Activated CD4-positive, alpha-beta memory T cell treated with anti-CD3 and anti-CD28 coated beads for 36 hours (primary cell): ENCODE measurements at regions of chr17 and their contacts with region 1.

Region 1: GRCh38 chr17:48307814-48308411 is 122.1 kb downstream of the SKAP1 start:
- DNase-seq: peak; percentile 66
- H3K4me3 Mint-ChIP-seq: no peak overlapping the region
- H3K27ac Mint-ChIP-seq: no peak overlapping the region
- H3K4me1 Mint-ChIP-seq: peaks cover 11% of the 10 kb centered on the region
- H3K27me3 Mint-ChIP-seq: no peaks in the 10 kb centered on the region

Region 2: DNA sequence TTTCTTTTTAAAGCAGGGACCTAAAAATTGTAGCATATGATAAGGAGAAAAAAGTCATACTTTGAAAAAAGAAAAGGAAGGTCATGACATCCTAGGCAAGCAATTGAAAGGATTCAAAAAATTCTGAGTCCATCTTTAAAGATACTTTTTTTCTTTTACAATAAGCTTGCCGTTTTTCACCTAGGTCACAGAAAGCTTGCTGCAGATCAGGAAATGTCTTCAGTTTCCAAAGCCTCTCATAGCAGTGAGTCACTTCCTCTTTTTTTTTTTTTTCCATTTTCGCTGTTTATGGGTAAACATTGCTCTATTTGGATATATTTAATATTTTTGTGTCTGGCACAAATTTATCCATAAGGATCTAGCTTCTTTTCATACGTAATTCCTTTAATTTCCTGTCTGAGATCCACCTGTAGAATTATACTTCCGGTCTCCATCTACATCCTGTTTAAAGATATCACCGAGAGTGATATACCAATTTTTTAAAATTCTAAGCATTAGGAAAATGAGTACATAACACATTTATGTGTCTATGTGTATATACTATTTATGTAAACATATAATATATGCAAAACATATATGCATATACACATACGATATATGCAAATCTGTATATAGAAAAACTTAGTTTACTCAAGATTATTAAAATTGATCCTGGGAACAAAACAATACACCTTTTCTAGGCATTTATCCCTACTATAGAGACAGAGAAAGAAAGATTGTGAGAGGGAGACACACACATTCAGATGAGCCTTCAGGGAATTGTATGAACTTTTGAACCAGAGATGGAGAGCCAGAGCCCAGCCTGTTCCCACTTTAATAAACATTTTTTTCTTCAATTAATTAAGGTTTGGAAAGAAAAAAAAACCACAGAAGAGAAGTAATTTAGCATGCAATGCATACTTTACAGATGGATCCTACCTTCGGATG is 12.3 kb before region 1 on chr17:
- CTCF ChIA-PET with region 1: interaction called, 12 read pairs
- POLR2A ChIA-PET with region 1: no interaction called
- intact Hi-C with region 1: no loop called
- DNase-seq: no peak
- H3K4me3 Mint-ChIP-seq: peak overlapping the region; percentile 59
- H3K27ac Mint-ChIP-seq: peak overlapping the region; percentile 92
- H3K4me1 Mint-ChIP-seq: peaks cover 66% of the 10 kb centered on the region
- H3K27me3 Mint-ChIP-seq: no peaks in the 10 kb centered on the region